GM12878 (cell line): ENCODE measurements at regions of chr7 and their contacts with region 1.

Region 1: GRCh38 chr7:5237286-5237685 is 45.5 kb upstream of the SLC29A4 start:
- DNase-seq: no peak
- ATAC-seq: no peak
- H3K4me3 ChIP-seq: no peak overlapping the region
- H3K27ac ChIP-seq: no peak overlapping the region
- H3K4me1 ChIP-seq: peaks cover 50% of the 10 kb centered on the region
- H3K27me3 ChIP-seq: peaks cover 0 to 1% of the 10 kb centered on the region in 2 experiments; a peak in 1 of 4 replicates
- CTCF ChIP-seq: no peak
- EP300 ChIP-seq: no peak
- POLR2A ChIP-seq: no peak
- RAD21 ChIP-seq: no peak

Region 2: DNA sequence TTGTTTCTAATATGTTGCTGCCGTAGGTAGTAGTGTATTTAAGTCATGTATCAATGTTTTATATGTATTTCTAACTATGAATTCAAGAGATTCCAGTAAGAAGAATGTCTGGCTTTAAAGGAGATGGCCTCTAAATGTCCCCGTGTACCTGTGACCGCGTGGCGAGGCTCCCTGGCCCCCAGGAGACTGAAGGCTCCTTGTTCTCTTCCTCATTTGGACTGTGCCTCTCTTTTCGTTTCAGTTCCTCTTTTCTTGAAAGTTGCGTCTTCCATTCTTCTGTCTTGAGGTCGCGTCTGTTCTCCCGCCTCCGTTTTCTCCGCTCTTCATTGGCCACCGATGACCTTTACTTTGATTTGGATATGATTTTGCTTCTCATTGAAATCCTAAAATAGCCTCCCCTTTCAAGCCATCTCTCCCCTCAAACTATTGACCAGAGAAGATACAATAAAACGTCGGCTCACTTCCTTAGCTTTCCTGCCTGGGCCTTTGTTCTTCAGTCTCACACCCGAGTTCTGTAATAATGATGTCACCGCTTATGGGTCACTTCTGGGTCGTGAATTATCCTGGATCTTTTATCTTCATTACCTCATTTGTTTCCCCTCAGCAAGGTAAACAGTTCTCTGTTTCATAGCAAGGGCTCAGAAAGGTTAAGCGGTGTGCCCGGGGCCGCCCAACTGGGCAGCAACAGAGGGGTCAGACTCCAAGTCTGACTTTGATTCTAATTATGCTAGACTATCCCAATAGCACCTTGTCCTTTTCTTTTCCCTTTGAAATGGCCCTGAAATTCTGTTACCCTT is 18.5 kb before region 1 on chr7:
- CTCF ChIA-PET with region 1: interaction called, 52 read pairs
- POLR2A ChIA-PET with region 1: interaction called, 53 read pairs
- RAD21 ChIA-PET with region 1: interaction called, 71 read pairs
- SMC1A ChIA-PET with region 1: interaction called, 139 read pairs
- in situ Hi-C with region 1: no loop called
- intact Hi-C with region 1: no loop called
- DNase-seq: peak; percentile 97
- ATAC-seq: peak; percentile 88
- H3K4me3 ChIP-seq: peak overlapping the region; percentile 40
- H3K27ac ChIP-seq: peak overlapping the region; percentile 96
- H3K4me1 ChIP-seq: peaks cover 28% of the 10 kb centered on the region
- H3K27me3 ChIP-seq: no peaks in the 10 kb centered on the region
- CTCF ChIP-seq: no peak
- EP300 ChIP-seq: peak; percentile 82 to 86; a peak in 3 of 4 replicates
- POLR2A ChIP-seq: peak; percentile 85
- RAD21 ChIP-seq: no peak

Region 3: GRCh38 chr7:5354460-5355232 is 117.4 kb after region 1 on chr7:
- CTCF ChIA-PET with region 1: interaction called, 11 read pairs
- POLR2A ChIA-PET with region 1: no interaction called
- RAD21 ChIA-PET with region 1: interaction called, 5 read pairs
- SMC1A ChIA-PET with region 1: interaction called, 8 read pairs
- in situ Hi-C with region 1: no loop called
- intact Hi-C with region 1: no loop called
- DNase-seq: no peak
- ATAC-seq: peak; percentile 92
- H3K4me3 ChIP-seq: no peak overlapping the region
- H3K27ac ChIP-seq: no peak overlapping the region; the same call in 1 of the 2 replicates
- H3K4me1 ChIP-seq: peaks cover 10% of the 10 kb centered on the region
- H3K27me3 ChIP-seq: no peaks in the 10 kb centered on the region
- CTCF ChIP-seq: no peak
- EP300 ChIP-seq: no peak
- POLR2A ChIP-seq: no peak
- RAD21 ChIP-seq: no peak

Region 4: GRCh38 chr7:5396999-5397663 is 159.8 kb after region 1 on chr7:
- CTCF ChIA-PET with region 1: interaction called, 21 read pairs
- POLR2A ChIA-PET with region 1: interaction called, 8 read pairs
- RAD21 ChIA-PET with region 1: interaction called, 18 read pairs
- SMC1A ChIA-PET with region 1: interaction called, 4 read pairs
- in situ Hi-C with region 1: no loop called
- intact Hi-C with region 1: no loop called
- DNase-seq: peak; percentile 77
- ATAC-seq: peak; percentile 96
- H3K4me3 ChIP-seq: peak overlapping the region; percentile 96
- H3K27ac ChIP-seq: peak overlapping the region; percentile 88
- H3K4me1 ChIP-seq: peaks cover 5% of the 10 kb centered on the region; the same call in 1 of the 2 replicates
- H3K27me3 ChIP-seq: no peaks in the 10 kb centered on the region
- CTCF ChIP-seq: no peak
- EP300 ChIP-seq: peak in 1 of 2 experiments; percentile 46; a peak in 2 of 4 replicates
- POLR2A ChIP-seq: peak; percentile 82
- RAD21 ChIP-seq: no peak

Region 5: GRCh38 chr7:5494683-5495561 is 257.6 kb after region 1 on chr7:
- CTCF ChIA-PET with region 1: interaction called, 9 read pairs
- POLR2A ChIA-PET with region 1: interaction called, 3 read pairs
- RAD21 ChIA-PET with region 1: interaction called, 13 read pairs
- SMC1A ChIA-PET with region 1: interaction called, 3 read pairs
- in situ Hi-C with region 1: no loop called
- intact Hi-C with region 1: no loop called
- DNase-seq: no peak
- ATAC-seq: peak; percentile 94
- H3K4me3 ChIP-seq: peak overlapping the region; percentile 53; the same call in 1 of the 2 replicates
- H3K27ac ChIP-seq: no peak overlapping the region
- H3K4me1 ChIP-seq: peaks cover 12% of the 10 kb centered on the region
- H3K27me3 ChIP-seq: no peaks in the 10 kb centered on the region
- CTCF ChIP-seq: peak; percentile 94 to 99 (median 96); a peak in 5 of 6 replicates
- EP300 ChIP-seq: peak in 1 of 2 experiments; percentile 24; a peak in 1 of 4 replicates
- POLR2A ChIP-seq: peak; percentile 21; the same call in 1 of the 2 replicates
- RAD21 ChIP-seq: peak; percentile 88